Activated CD4-positive, alpha-beta memory T cell treated with anti-CD3 and anti-CD28 coated beads for 36 hours (primary cell): ENCODE measurements at regions of chr15 and their contacts with region 1.

Region 1: DNA sequence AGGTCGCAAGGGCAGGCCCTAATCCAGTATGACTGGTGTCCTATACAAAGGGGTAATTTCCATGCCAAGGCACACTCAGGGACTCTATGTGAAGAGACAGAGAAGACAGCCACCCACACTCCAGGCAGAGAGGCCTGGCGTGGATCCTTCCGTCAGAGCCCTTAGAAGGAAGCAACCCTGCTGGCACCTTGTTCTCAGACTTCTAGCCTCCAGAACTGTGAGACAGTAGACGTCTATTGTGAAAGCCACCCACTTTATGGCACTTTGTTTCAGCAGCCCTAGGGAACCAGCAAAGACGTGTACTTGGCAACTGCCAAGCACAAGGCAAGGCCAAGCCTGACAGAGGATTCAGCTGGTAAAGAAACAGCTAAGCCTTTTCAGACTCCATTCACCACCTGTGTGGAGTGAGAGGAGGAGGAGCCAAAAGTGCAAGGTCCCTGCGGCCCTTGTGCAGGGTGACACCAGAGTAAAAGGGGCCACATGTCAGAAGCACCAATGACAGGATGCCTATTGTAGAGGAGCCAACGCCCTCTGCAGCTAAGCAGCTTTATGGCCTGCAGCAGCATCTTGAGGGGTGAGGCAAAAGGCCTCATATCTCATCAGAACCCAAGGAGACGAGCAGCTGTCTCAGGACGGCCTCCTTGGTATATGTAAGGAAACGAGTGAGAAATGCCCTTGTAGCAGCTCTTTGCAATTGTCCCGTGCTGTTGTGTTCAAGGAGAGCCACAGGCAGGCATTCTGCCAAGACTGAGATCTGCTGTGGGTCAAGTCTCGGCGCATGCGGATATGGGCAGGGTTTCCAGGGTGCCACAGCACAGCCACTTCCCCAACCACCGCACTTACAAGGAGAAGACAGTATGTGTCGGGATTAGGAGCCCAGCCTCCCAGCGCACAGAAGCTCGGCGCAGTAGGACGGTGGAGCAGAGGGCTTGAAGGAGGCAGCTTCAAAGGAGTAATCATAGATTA is 121.5 kb upstream of the LIPC start:
- DNase-seq: no peak
- H3K4me3 Mint-ChIP-seq: no peak overlapping the region
- H3K27ac Mint-ChIP-seq: no peak overlapping the region
- H3K4me1 Mint-ChIP-seq: peaks cover 19% of the 10 kb centered on the region
- H3K27me3 Mint-ChIP-seq: no peaks in the 10 kb centered on the region

Region 2: DNA sequence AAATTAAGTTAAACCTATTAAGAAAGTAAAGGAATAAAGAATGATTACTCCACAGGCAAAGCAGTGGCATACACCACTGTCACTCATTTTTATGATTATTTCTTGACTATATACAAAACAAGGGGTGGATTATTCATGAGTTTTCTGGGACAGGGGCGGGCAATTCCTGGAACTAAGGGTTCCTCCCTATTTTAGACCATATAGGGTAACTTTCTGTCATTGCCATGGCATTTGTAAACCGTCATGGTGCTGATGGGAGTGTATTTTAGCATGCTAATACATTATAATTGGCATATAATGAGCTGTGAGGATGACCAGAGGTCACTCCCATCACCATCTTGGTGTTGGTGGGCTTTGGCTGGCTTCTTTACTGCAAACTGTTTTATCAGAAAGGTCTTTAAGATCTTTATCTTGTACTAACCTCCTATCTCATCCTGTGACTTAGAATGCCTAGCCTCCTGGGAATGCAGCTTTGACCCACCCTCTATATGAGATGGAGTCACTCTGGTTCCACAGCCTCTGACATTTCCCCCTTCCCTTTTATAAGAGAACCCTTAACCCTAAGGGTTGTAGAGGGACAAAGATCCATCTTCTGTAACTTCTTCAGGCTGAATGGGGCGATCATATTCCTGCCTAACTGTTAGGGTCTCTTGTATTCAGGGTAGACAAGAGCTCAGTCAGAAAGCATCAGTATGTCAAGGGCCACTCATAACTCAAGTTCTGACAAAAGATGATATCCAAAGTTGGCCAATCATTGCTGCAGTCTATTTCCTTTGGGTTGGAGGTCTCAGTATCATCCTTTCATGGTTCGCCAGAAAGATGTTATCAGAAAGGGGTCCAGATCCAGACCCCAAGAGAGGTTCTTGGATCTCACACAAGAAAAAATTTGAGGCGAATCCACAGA is 42.0 kb after region 1 on chr15:
- CTCF ChIA-PET with region 1: no interaction called
- POLR2A ChIA-PET with region 1: no interaction called
- intact Hi-C with region 1: loop called (anchors 5 kb)
- DNase-seq: peak; percentile 29
- H3K4me3 Mint-ChIP-seq: no peak overlapping the region
- H3K27ac Mint-ChIP-seq: no peak overlapping the region
- H3K4me1 Mint-ChIP-seq: peaks cover 19% of the 10 kb centered on the region
- H3K27me3 Mint-ChIP-seq: peaks cover 2% of the 10 kb centered on the region

Region 3: GRCh38 chr15:58987489-58988005 is 677.3 kb after region 1 on chr15 and contains the start of gene RNF111:
- CTCF ChIA-PET with region 1: no interaction called
- POLR2A ChIA-PET with region 1: no interaction called
- intact Hi-C with region 1: no loop called
- DNase-seq: peak; percentile 94
- H3K4me3 Mint-ChIP-seq: peak within 1 kb of the TSS; percentile 96
- H3K27ac Mint-ChIP-seq: peak within 1 kb of the TSS; percentile 87
- H3K4me1 Mint-ChIP-seq: peaks cover 38% of the 10 kb centered on the region
- H3K27me3 Mint-ChIP-seq: no peaks in the 10 kb centered on the region
- total RNA-seq, gene RNF111: 22.6 to 25.0 TPM